Mammary epithelial cell (primary cell): ENCODE measurements at regions of chr5 and their contacts with region 1.

Region 1: GRCh38 chr5:143403593-143404415 is at the start of gene NR3C1:
- DNase-seq: peak; percentile 83
- H3K4me3 ChIP-seq: peak within 1 kb of the TSS; percentile 78 to 94 (median 83)
- H3K27ac ChIP-seq: peak within 1 kb of the TSS; percentile 97
- H3K4me1 ChIP-seq: peaks cover 11% of the 10 kb centered on the region
- H3K27me3 ChIP-seq: no peaks in the 10 kb centered on the region
- CTCF ChIP-seq: peak; percentile 10 to 42
- total RNA-seq, gene NR3C1: 62.8 to 64.4 TPM

Region 2: GRCh38 chr5:142713121-142713706 is 690.6 kb before region 1 on chr5:
- CTCF ChIA-PET with region 1: no interaction called
- dilution Hi-C with region 1: no loop called
- in situ Hi-C with region 1: no loop called
- intact Hi-C with region 1: loop called (anchors 2 kb)
- DNase-seq: peak; percentile 79
- H3K4me3 ChIP-seq: peak overlapping the region; percentile 59 to 70 (median 67)
- H3K27ac ChIP-seq: peak overlapping the region; percentile 68
- H3K4me1 ChIP-seq: peaks cover 5% of the 10 kb centered on the region
- H3K27me3 ChIP-seq: no peaks in the 10 kb centered on the region
- CTCF ChIP-seq: peak; percentile 73 to 88

Region 3: GRCh38 chr5:143008809-143009521 is 394.8 kb before region 1 on chr5:
- CTCF ChIA-PET with region 1: no interaction called
- dilution Hi-C with region 1: loop called (anchors 5 kb)
- in situ Hi-C with region 1: loop called in 1 of 2 experiments (anchors 10 kb)
- intact Hi-C with region 1: loop called (anchors 2 kb)
- DNase-seq: peak; percentile 100
- H3K4me3 ChIP-seq: no peak overlapping the region
- H3K27ac ChIP-seq: peak overlapping the region; percentile 91
- H3K4me1 ChIP-seq: peaks cover 25% of the 10 kb centered on the region
- H3K27me3 ChIP-seq: no peaks in the 10 kb centered on the region
- CTCF ChIP-seq: peak in 1 of 2 donors; percentile 6

Region 4: DNA sequence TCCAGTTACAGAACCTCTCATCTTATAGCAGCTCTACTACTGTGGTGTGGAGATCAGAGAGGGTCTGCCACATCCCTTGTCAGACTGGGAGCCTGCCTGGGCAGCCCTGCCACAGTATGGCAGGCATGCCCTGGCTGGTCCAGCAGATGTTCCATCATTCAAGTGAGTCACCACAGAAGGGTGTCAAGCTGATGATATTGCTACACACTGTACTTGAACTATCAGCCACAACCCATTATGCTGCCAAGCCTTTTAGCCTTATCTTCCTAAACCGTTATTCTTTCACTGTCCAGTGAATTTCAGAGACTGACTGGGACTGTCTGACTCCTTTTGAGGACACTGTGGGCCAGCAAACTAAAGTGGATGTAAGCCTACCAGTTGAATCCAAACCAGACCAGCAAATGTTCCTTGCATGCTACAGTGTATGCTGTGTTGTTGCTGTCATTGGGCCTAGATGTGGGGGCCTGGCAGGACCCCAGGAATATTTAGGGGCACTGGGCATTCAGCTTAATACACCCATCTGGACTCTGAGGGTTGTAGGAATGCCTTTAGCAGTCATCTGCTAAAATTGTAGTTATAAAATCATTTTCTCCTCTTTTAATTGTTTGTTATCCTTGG is 202.9 kb before region 1 on chr5:
- CTCF ChIA-PET with region 1: no interaction called
- dilution Hi-C with region 1: loop called (anchors 5 kb)
- in situ Hi-C with region 1: loop called in 1 of 2 experiments (anchors 25 kb)
- intact Hi-C with region 1: loop called (anchors 2 kb)
- DNase-seq: peak; percentile 96
- H3K4me3 ChIP-seq: no peak overlapping the region
- H3K27ac ChIP-seq: peak overlapping the region; percentile 68
- H3K4me1 ChIP-seq: peaks cover 67% of the 10 kb centered on the region
- H3K27me3 ChIP-seq: no peaks in the 10 kb centered on the region
- CTCF ChIP-seq: no peak

Region 5: DNA sequence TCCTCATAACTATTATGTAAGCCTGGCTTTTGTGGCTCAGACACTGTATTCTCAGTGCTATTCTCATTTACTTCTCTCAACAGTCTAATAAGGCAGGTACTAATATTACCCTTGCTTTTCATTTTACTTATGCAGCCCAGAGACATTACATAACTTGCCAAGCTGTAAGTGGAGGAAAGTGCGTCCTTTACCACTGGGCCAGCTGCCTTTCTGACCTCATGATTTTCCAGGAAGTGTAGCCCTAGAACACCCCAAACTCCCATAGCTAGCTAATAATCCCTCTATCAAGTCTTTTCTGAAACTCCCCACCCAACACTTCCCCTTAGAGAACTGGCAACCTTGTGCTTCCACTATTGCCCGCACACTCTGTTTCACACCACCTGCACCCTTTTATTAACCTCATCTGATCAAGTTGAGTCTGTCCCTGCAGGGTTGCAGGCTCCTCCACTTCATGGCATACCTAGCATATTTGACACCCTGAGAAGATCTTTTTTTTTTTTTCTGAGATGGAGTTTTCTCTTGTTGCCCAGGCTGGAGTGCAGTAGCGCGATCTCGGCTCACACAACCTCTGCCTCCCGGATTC is 215.3 kb after region 1 on chr5:
- CTCF ChIA-PET with region 1: no interaction called
- dilution Hi-C with region 1: no loop called
- in situ Hi-C with region 1: no loop called
- intact Hi-C with region 1: no loop called
- DNase-seq: no peak
- H3K4me3 ChIP-seq: no peak overlapping the region
- H3K27ac ChIP-seq: no peak overlapping the region
- H3K4me1 ChIP-seq: no peaks in the 10 kb centered on the region
- H3K27me3 ChIP-seq: no peaks in the 10 kb centered on the region
- CTCF ChIP-seq: no peak

Region 6: DNA sequence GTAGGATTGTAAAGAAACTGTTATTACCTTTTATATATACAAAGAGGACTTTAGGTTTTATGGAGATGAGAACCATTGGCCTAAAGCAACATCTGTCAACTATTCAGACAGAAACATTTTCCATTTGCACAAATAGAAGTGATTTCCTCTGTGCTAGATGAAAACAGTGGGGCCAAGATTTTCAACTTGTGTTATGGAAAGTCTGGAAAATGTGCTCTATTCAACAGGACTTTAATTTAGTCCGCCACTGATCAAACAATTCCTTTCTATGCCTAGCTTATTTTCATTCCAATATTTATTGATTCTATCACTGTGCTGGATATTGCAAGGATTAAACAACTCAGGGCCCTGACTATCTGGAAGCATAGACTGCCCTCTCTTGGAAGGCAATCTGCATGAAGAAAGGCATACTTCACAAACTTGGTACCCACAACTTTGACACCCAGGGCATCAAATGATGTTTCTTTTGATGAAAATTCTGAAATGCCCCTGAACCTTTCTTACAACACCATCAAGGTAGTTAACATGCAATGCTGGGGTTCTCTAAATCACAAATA is 281.5 kb after region 1 on chr5:
- CTCF ChIA-PET with region 1: no interaction called
- dilution Hi-C with region 1: no loop called
- in situ Hi-C with region 1: no loop called
- intact Hi-C with region 1: loop called (anchors 1 kb)
- DNase-seq: no peak
- H3K4me3 ChIP-seq: no peak overlapping the region
- H3K27ac ChIP-seq: no peak overlapping the region
- H3K4me1 ChIP-seq: no peaks in the 10 kb centered on the region
- H3K27me3 ChIP-seq: no peaks in the 10 kb centered on the region
- CTCF ChIP-seq: peak; percentile 27 to 63

Region 7: DNA sequence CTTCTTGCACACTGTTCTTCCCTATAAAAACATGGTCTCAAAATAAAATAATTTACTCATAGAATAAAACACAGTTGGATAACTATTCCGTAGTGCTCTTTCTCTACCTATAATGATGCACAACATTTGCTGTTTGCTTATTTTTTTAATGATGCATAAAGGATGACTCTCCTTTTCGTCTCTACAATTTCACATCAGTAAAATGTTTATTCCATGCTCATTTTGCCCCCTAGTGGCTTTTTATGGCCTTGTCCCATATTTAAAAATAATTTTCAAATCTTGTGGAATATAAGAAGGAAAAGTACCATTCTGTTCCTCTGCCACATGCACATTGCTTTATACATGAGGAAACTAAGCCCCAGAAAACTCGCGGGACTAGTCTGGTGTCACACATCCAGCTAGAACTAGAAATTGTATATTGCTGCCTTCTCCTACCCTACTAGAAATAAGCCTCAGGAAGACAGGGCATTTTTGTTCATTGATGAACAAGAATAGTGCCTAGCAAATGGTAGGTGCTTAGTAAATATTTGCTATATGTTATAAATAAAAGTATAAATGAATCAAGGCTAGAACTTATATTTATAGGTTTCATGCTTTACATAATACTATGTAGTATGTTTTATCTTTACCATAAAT is 779.6 kb after region 1 on chr5:
- CTCF ChIA-PET with region 1: no interaction called
- dilution Hi-C with region 1: no loop called
- in situ Hi-C with region 1: no loop called
- intact Hi-C with region 1: loop called (anchors 5 kb)
- DNase-seq: peak; percentile 41
- H3K4me3 ChIP-seq: no peak overlapping the region
- H3K27ac ChIP-seq: no peak overlapping the region
- H3K4me1 ChIP-seq: peaks cover 8% of the 10 kb centered on the region
- H3K27me3 ChIP-seq: no peaks in the 10 kb centered on the region
- CTCF ChIP-seq: peak; percentile 62 to 73